ENCODE measurements at regions of chr11 and their contacts with region 1.

Region 1: DNA sequence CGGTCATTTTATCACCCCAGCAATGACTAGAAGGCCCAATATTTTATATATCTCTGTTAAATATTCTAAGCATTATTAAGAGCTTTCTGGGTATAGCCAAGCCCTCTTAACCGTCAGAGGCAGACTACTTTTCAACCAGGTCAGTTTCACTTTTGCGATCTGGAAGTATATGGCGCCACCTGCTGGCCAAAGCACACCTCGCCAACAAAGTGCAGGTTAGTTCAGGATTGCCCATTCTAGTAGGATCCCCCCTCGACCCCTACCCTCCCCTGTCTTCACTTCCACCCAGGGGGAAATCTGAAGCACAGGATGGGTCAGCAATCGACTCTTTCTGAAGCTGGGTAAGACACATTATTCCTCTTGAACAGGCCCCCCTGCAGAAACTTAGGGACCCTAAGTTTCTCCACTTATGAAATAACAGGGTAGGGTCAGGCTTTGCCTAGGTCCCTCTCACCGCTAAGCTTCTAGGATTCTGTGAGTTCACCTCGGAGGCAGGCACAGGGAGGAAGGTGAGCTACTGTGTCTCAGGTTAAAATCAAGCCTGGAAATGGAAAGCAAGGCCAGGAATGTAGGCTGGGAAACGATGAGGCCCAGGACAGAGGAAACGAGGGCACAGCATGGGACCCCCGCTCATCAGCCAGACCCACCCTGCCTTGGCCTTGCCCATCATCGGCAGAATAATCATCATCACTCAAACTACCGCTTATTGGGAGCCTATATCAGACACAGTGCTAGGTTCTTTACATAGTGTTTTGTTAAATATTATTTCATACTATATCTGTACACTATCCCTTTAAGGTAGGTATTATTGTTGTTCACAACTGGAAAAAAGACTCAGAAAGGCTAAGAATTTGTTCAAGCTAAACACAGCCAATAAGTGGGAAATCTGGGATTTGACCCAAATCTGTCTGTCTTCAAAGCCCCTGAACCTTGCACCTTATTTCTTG is 35.6 kb downstream of the KCNJ1 start:
- DNase-seq: peak; percentile 76
- H3K4me3 ChIP-seq: no peak overlapping the region
- H3K27ac ChIP-seq: no peak overlapping the region
- H3K27me3 ChIP-seq: peaks cover 7% of the 10 kb centered on the region
- CTCF ChIP-seq: peak; percentile 84

Region 2: GRCh38 chr11:128172046-128172878 is 659.2 kb before region 1 on chr11:
- CTCF ChIA-PET with region 1: interaction called, 148 read pairs
- POLR2A ChIA-PET with region 1: no interaction called
- DNase-seq: peak; percentile 72
- H3K4me3 ChIP-seq: no peak overlapping the region
- H3K27ac ChIP-seq: no peak overlapping the region
- H3K27me3 ChIP-seq: no peaks in the 10 kb centered on the region
- CTCF ChIP-seq: peak; percentile 83

Region 3: GRCh38 chr11:128279866-128280265 is 551.6 kb before region 1 on chr11:
- CTCF ChIA-PET with region 1: interaction called, 12 read pairs
- POLR2A ChIA-PET with region 1: no interaction called
- DNase-seq: no peak
- H3K4me3 ChIP-seq: no peak overlapping the region
- H3K27ac ChIP-seq: no peak overlapping the region
- H3K27me3 ChIP-seq: no peaks in the 10 kb centered on the region
- CTCF ChIP-seq: no peak

Region 4: DNA sequence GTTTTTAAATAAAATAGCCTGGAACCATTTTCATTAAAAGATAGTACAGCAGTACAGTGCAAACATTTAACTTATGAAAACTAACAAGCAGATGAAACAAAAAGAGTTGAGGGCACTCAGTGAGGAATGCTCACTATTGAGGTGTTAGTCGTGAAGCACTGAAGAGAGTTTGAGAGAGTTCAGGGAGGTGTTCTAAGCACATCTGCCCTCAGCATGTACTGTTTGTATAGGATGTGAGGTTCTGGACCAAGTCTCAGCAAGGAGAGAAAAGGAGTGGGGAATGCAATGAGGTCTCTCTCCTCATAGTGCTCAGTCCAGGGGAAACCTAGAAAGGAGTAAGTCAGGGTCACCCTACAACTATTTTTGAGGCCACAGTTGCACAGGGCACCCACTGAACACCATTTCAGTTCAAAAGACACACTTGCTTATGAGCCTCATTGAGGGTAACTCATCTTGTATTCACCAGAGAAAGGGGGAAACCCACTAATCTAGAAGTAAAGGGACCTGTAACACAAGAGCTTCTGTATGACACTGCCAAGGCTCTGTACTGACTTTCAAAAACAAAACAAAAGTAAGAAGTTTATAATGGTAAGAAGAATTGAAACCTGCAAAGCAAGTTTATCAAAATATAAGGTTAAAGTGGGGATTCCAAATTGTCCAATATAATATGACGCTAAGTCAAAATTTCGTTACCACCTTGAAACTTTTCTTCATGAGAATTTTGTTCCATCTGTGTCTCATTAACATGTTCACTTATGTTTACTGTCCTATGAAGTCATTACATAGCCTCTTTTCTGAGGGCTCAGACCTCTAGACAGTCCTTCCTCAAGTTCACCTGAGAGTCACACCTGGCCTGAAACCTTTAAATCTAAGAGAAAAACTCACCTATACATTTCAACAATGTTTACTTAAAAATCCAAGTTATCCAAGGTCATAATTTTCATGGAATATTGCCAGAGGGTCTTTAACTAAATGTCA is 519.4 kb before region 1 on chr11:
- CTCF ChIA-PET with region 1: no interaction called
- POLR2A ChIA-PET with region 1: no interaction called
- DNase-seq: no peak
- H3K4me3 ChIP-seq: no peak overlapping the region
- H3K27ac ChIP-seq: no peak overlapping the region
- H3K27me3 ChIP-seq: no peaks in the 10 kb centered on the region
- CTCF ChIP-seq: no peak

Region 5: DNA sequence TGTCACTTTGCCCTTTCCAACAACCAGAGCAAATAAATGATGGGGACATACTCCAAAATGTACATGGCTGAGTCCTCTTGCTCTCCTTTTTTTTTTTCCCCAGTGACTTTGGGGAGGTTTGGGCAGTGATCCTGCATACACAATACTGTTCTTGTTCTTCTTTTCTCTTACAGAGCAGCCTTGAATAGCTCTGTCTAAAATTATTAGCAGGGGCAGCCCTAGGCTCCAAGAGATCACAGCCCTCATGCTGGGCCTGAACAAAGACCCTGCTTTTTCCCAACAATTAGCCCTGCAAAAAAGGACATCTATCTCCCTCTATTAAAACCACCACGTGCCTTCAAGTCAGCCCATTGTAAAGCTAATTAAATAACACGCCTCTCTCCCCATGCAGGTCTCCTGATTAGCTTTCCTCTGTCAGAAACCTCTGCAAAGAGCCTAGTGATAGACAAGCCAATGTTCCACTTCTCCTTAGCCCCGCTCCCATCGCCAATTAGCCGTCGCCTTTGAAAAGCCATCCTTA is 298.8 kb before region 1 on chr11:
- CTCF ChIA-PET with region 1: no interaction called
- POLR2A ChIA-PET with region 1: no interaction called
- DNase-seq: no peak
- H3K4me3 ChIP-seq: no peak overlapping the region
- H3K27ac ChIP-seq: no peak overlapping the region
- H3K27me3 ChIP-seq: no peaks in the 10 kb centered on the region
- CTCF ChIP-seq: no peak

Region 6: GRCh38 chr11:128660947-128661346 is 170.5 kb before region 1 on chr11:
- CTCF ChIA-PET with region 1: interaction called, 10 read pairs
- POLR2A ChIA-PET with region 1: no interaction called
- DNase-seq: no peak
- H3K4me3 ChIP-seq: no peak overlapping the region
- H3K27ac ChIP-seq: no peak overlapping the region
- H3K27me3 ChIP-seq: peaks cover 8% of the 10 kb centered on the region
- CTCF ChIP-seq: no peak

Region 7: GRCh38 chr11:128717516-128717915 is 113.9 kb before region 1 on chr11:
- CTCF ChIA-PET with region 1: no interaction called
- POLR2A ChIA-PET with region 1: no interaction called
- DNase-seq: no peak
- H3K4me3 ChIP-seq: no peak overlapping the region
- H3K27ac ChIP-seq: no peak overlapping the region
- H3K27me3 ChIP-seq: peaks cover 3% of the 10 kb centered on the region
- CTCF ChIP-seq: no peak

Region 8: GRCh38 chr11:128806506-128807261 is 24.8 kb before region 1 on chr11:
- CTCF ChIA-PET with region 1: interaction called, 10 read pairs
- POLR2A ChIA-PET with region 1: no interaction called
- DNase-seq: no peak
- H3K4me3 ChIP-seq: no peak overlapping the region
- H3K27ac ChIP-seq: peak overlapping the region; percentile 34
- H3K27me3 ChIP-seq: no peaks in the 10 kb centered on the region
- CTCF ChIP-seq: no peak